Heart left ventricle (tissue), 16 donors: ENCODE measurements at regions of chr15 and their contacts with region 1.

Region 1: GRCh38 chr15:41603941-41604911 is 45.2 kb downstream of the TYRO3 start:
- DNase-seq: peak; percentile 56 to 75 (median 71)
- ATAC-seq: peak; percentile 76 to 93 (median 92)
- H3K4me3 ChIP-seq: peak overlapping the region in 8 of 12 donors; percentile 7 to 46 (median 36)
- H3K27ac ChIP-seq: peak overlapping the region in 1 of 12 donors; percentile 6
- H3K4me1 ChIP-seq: peaks cover 0 to 13% (median 6%) of the 10 kb centered on the region in 12 donors
- H3K27me3 ChIP-seq: no peaks in the 10 kb centered on the region
- CTCF ChIP-seq: peak; percentile 58 to 87 (median 78)
- POLR2A ChIP-seq: no peak

Region 2: DNA sequence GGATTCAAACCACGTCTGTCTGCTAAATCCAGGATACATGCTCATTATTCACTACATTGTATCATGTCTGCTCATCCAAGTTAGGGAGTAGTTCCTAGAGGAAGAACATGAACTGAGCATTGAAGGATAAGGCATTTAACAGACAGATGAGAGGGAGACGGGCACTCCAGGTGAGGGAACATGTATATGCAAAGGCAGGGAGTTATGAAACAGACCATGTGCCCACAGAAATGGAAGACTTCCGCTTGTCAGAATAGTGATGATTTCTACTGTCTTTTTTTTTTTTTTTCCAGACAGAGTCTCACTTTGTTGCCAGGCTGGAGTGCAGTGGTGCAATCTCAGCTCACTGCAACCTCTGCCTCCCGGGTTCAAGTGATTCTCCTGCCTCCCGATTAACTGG is 196.9 kb before region 1 on chr15:
- intact Hi-C with region 1: no loop called
- DNase-seq: no peak
- ATAC-seq: no peak
- H3K4me3 ChIP-seq: no peak overlapping the region
- H3K27ac ChIP-seq: no peak overlapping the region
- H3K4me1 ChIP-seq: peaks cover 0 to 9% (median 2%) of the 10 kb centered on the region in 12 donors
- H3K27me3 ChIP-seq: no peaks in the 10 kb centered on the region
- CTCF ChIP-seq: no peak
- POLR2A ChIP-seq: no peak

Region 3: GRCh38 chr15:41557673-41558399 is 46.4 kb before region 1 on chr15:
- intact Hi-C with region 1: loop called in 1 of 10 experiments (anchors 5 kb)
- DNase-seq: peak; percentile 58 to 83 (median 66)
- ATAC-seq: peak; percentile 64 to 77 (median 71)
- H3K4me3 ChIP-seq: peak overlapping the region in 8 of 12 donors; percentile 9 to 94 (median 63)
- H3K27ac ChIP-seq: peak overlapping the region in 6 of 12 donors; percentile 18 to 38 (median 32)
- H3K4me1 ChIP-seq: peaks cover 0 to 43% (median 19%) of the 10 kb centered on the region in 12 donors
- H3K27me3 ChIP-seq: peaks cover 0 to 6% (median 0%) of the 10 kb centered on the region in 9 donors
- CTCF ChIP-seq: peak; percentile 72 to 90 (median 82)
- POLR2A ChIP-seq: no peak

Region 4: GRCh38 chr15:41568350-41569017 is 35.7 kb before region 1 on chr15:
- intact Hi-C with region 1: no loop called
- DNase-seq: peak in 1 of 5 donors; percentile 54
- ATAC-seq: peak; percentile 22 to 70 (median 48)
- H3K4me3 ChIP-seq: no peak overlapping the region
- H3K27ac ChIP-seq: no peak overlapping the region
- H3K4me1 ChIP-seq: peaks cover 0 to 12% (median 6%) of the 10 kb centered on the region in 12 donors
- H3K27me3 ChIP-seq: no peaks in the 10 kb centered on the region
- CTCF ChIP-seq: no peak
- POLR2A ChIP-seq: no peak

Region 5: GRCh38 chr15:41660235-41661077 is 56.2 kb after region 1 on chr15 and contains the start of gene MGA:
- intact Hi-C with region 1: loop called in 1 of 10 experiments (anchors 10 kb)
- DNase-seq: peak; percentile 91 to 96 (median 93)
- ATAC-seq: peak; percentile 92 to 95 (median 94)
- H3K4me3 ChIP-seq: peak within 1 kb of the TSS; percentile 34 to 77 (median 64)
- H3K27ac ChIP-seq: peak within 1 kb of the TSS; percentile 45 to 92 (median 78)
- H3K4me1 ChIP-seq: peaks cover 0 to 58% (median 24%) of the 10 kb centered on the region in 12 donors
- H3K27me3 ChIP-seq: no peaks in the 10 kb centered on the region
- CTCF ChIP-seq: peak in 4 of 12 donors; percentile 14 to 43 (median 31)
- POLR2A ChIP-seq: peak in 1 of 2 donors; percentile 53
- total RNA-seq, gene MGA: 23.1 to 58.7 (median 37.2) TPM

Region 6: GRCh38 chr15:41703120-41703519 is 98.9 kb after region 1 on chr15:
- intact Hi-C with region 1: loop called in 1 of 10 experiments (anchors 10 kb)
- DNase-seq: no peak
- ATAC-seq: no peak
- H3K4me3 ChIP-seq: no peak overlapping the region
- H3K27ac ChIP-seq: no peak overlapping the region
- H3K4me1 ChIP-seq: no peaks in the 10 kb centered on the region
- H3K27me3 ChIP-seq: no peaks in the 10 kb centered on the region
- CTCF ChIP-seq: no peak
- POLR2A ChIP-seq: no peak

Region 7: DNA sequence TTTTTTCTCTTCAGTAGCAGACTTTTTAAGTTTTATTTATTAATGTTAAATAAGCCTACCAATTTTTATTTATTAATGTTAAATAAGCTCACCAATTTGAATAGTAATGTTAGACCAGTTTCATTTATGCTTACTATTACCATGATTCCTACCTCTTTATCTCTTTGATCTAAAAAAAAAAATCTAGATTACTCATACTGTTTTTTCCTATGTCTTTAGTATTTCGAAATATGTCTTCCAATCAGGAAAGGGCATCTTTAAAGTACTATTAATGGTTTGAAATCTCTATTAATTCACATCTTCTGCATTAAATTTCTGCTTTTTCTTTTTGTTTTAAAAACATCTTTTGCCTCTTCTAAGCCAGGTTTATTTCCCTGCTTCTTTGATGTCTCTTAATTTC is 142.6 kb after region 1 on chr15:
- intact Hi-C with region 1: no loop called
- DNase-seq: no peak
- ATAC-seq: no peak
- H3K4me3 ChIP-seq: no peak overlapping the region
- H3K27ac ChIP-seq: no peak overlapping the region
- H3K4me1 ChIP-seq: no peaks in the 10 kb centered on the region
- H3K27me3 ChIP-seq: no peaks in the 10 kb centered on the region
- CTCF ChIP-seq: no peak
- POLR2A ChIP-seq: no peak

Region 8: DNA sequence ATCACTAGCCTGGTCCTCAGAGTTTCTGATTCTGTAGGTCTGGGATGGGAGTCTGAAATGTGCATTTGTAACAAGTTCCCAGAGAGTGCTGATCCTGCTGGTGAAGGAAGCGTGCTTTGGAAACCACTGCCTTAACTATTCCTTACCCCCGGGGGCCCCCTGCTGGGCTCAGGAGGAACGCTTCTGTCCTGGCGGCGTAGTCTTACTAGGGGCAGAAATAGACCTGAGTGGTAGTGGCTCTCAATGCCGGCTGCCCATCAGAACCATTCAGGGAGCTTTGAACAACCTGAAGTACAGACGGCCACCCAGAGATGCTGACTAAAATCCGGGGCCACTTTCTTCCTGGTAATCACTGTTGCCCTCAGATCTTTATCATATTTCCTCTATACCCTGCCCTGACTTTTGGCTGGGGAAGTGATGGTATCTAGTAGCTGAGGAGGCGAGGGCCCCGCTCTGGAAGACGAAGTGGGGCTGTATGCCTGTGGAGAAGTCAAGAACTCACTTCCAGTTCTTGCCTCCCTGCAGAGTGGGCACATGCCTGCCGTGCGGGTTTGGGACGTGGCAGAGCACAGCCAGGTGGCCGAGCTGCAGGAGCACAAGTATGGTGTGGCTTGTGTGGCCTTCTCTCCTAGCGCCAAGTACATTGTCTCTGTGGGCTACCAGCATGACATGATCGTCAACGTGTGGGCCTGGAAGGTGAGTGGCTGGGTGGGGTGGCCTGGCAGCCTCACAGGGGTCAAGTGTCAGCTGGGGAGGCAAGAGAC is 207.4 kb after region 1 on chr15:
- intact Hi-C with region 1: loop called in 7 of 10 experiments (anchors 2 to 10 kb)
- DNase-seq: peak; percentile 79 to 87 (median 86)
- ATAC-seq: peak; percentile 84 to 92 (median 91)
- H3K4me3 ChIP-seq: no peak overlapping the region
- H3K27ac ChIP-seq: no peak overlapping the region
- H3K4me1 ChIP-seq: peaks cover 0 to 12% (median 2%) of the 10 kb centered on the region in 12 donors
- H3K27me3 ChIP-seq: no peaks in the 10 kb centered on the region
- CTCF ChIP-seq: peak; percentile 77 to 95 (median 90)
- POLR2A ChIP-seq: no peak